Right ventricle myocardium inferior (tissue), 1 donor: ENCODE measurements at regions of chr1 and their contacts with region 1.

Region 1: GRCh38 chr1:43946236-43947060 is at the start of gene IPO13:
- DNase-seq: peak; percentile 98
- ATAC-seq: peak; percentile 98
- total RNA-seq, gene IPO13: 56.9 TPM

Region 2: GRCh38 chr1:43763497-43763973 is 182.9 kb before region 1 on chr1:
- intact Hi-C with region 1: loop called (anchors 5 kb)
- DNase-seq: no peak
- ATAC-seq: peak; percentile 94

Region 3: DNA sequence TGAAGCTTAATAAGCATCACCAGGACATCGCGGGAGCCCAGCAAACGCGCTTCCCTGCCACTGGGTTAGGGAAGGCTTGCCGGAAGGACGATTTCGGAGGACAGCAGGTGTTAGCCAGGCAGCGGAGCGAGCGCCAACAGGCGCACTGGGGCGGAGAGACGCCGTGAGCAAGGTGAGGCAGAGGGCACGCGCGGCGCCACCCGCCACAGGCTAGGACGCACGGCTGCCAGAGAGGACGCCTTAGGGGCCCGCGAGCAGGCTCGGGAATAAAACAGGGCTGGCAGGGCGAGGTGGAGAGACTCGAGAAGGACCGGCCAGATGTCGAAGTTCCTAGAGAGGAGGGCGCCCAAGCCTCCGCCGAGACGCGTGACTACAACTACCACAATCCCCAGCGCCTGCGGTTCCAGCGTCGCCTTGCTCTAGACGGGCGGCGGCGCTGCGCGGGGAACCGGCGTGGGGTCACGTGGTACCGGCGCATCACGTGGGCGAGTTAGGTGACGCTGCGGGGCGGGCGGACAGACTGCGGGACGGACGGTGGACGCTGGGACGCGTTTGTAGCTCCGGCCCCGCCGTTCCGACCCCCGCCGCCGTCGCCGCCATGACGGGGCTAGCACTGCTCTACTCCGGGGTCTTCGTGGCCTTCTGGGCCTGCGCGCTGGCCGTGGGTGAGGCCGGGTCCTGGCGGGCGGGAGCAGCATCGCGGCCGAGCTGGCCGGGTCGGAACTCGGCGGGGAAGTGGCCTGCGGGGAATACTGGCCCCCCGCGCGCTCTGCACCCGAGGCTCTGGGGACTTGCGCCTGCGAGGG is 28.2 kb after region 1 on chr1 and contains the start of gene ATP6V0B:
- intact Hi-C with region 1: loop called (anchors 1 kb)
- DNase-seq: peak; percentile 99
- ATAC-seq: peak; percentile 91
- total RNA-seq, gene ATP6V0B: 84.5 TPM